ENCODE measurements at regions of chr18 and their contacts with region 1.

Region 1: GRCh38 chr18:20996418-20996817 is 115.2 kb downstream of the ROCK1 start:
- H3K4me3 Mint-ChIP-seq: no peak overlapping the region
- H3K27ac Mint-ChIP-seq: peak overlapping the region; percentile 6
- H3K4me1 Mint-ChIP-seq: peaks cover 19% of the 10 kb centered on the region
- H3K27me3 Mint-ChIP-seq: no peaks in the 10 kb centered on the region

Region 2: DNA sequence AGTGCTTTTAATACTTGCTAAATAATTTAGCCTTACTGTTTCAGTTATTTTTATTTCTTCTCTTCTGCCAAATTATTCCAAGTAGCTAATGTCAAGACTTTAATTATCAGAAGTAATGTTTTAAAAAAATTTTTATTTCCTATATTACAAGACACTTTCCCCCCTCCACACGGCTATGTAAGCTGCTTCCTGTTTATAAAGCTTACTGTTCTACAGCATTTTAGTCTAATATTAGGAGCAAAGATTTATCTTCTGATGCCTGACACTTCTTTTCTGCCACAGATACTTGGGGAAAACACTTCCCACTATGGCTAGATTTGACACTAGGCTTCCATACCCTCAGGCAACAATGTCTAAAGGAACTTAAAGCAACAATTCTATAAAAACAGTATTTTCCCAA is 52.9 kb after region 1 on chr18:
- intact Hi-C with region 1: loop called (anchors 10 kb)
- H3K4me3 Mint-ChIP-seq: no peak overlapping the region
- H3K27ac Mint-ChIP-seq: no peak overlapping the region
- H3K4me1 Mint-ChIP-seq: peaks cover 17% of the 10 kb centered on the region
- H3K27me3 Mint-ChIP-seq: no peaks in the 10 kb centered on the region

Region 3: GRCh38 chr18:22230471-22230945 is 1234.1 kb after region 1 on chr18:
- intact Hi-C with region 1: no loop called
- H3K4me3 Mint-ChIP-seq: no peak overlapping the region
- H3K27ac Mint-ChIP-seq: no peak overlapping the region
- H3K4me1 Mint-ChIP-seq: no peaks in the 10 kb centered on the region
- H3K27me3 Mint-ChIP-seq: peaks cover 2% of the 10 kb centered on the region